ENCODE measurements at regions of chr1 and their contacts with region 1.

Region 1: GRCh38 chr1:161098210-161099068 is at the start of gene KLHDC9:
- DNase-seq: peak; percentile 87
- H3K4me3 Mint-ChIP-seq: peak within 1 kb of the TSS; percentile 73
- H3K27ac Mint-ChIP-seq: peak within 1 kb of the TSS; percentile 74
- H3K4me1 Mint-ChIP-seq: peaks cover 37% of the 10 kb centered on the region
- H3K27me3 Mint-ChIP-seq: no peaks in the 10 kb centered on the region
- total RNA-seq, gene KLHDC9: 1.2 to 1.6 TPM

Region 2: GRCh38 chr1:160795951-160796383 is 302.5 kb before region 1 on chr1 and contains the start of gene LY9:
- CTCF ChIA-PET with region 1: no interaction called
- POLR2A ChIA-PET with region 1: no interaction called
- intact Hi-C with region 1: loop called (anchors 10 kb)
- DNase-seq: peak; percentile 90
- H3K4me3 Mint-ChIP-seq: peak within 1 kb of the TSS; percentile 77
- H3K27ac Mint-ChIP-seq: peak within 1 kb of the TSS; percentile 88
- H3K4me1 Mint-ChIP-seq: peaks cover 61% of the 10 kb centered on the region
- H3K27me3 Mint-ChIP-seq: no peaks in the 10 kb centered on the region
- total RNA-seq, gene LY9: 4.8 to 4.9 TPM

Region 3: GRCh38 chr1:160997323-160998038 is 101.0 kb before region 1 on chr1:
- CTCF ChIA-PET with region 1: interaction called, 65 read pairs
- POLR2A ChIA-PET with region 1: no interaction called
- intact Hi-C with region 1: loop called (anchors 2 kb)
- DNase-seq: peak; percentile 68
- H3K4me3 Mint-ChIP-seq: no peak overlapping the region
- H3K27ac Mint-ChIP-seq: peak overlapping the region; percentile 31
- H3K4me1 Mint-ChIP-seq: peaks cover 22% of the 10 kb centered on the region
- H3K27me3 Mint-ChIP-seq: no peaks in the 10 kb centered on the region

Region 4: GRCh38 chr1:161061419-161061818 is 37.0 kb before region 1 on chr1:
- CTCF ChIA-PET with region 1: interaction called, 5 read pairs
- POLR2A ChIA-PET with region 1: interaction called, 3 read pairs
- intact Hi-C with region 1: loop called (anchors 5 kb)
- DNase-seq: no peak
- H3K4me3 Mint-ChIP-seq: no peak overlapping the region
- H3K27ac Mint-ChIP-seq: no peak overlapping the region
- H3K4me1 Mint-ChIP-seq: peaks cover 55% of the 10 kb centered on the region
- H3K27me3 Mint-ChIP-seq: no peaks in the 10 kb centered on the region

Region 5: DNA sequence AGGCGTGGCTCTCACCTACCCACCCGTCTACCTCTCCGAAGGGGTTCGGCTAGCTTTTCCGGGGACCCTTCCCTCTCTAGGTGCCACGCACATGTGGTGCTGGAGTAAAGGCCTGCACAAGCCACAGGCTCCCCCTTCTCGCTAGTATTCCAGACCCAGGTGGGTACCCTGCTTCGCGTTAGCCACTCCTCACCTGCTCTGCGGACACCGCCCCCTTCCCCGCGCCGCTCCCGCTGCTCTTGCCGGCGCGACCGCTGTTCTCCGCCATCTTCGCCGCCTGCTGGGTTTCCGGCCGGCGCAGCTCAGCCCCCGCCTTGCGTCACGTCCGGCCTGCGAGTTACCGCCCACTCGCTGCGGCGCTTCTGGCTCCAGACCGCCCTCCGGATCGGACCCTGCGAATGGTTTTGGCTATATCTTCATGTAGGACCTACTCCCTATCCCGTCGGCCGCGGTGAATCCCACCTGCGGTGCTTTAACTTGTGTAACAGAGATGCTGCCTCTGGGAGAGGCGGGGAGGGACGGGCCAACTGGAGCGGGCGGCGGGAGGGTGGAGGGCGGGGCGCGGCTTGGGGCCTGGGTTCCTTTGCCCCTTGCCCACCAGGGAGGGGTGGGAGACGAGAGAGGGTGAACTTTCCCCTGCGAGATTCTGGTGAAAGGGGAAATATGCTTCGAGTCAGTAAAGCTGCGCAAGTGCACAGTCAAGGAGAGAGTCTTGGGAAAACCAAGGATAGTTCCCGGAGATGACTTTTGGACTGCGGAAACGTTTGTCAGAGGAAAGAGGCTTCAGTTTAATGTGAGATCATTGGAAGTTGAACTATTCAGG is 19.5 kb after region 1 on chr1 and contains the starts of genes NIT1 and PFDN2:
- CTCF ChIA-PET with region 1: interaction called, 40 read pairs
- POLR2A ChIA-PET with region 1: interaction called, 6 read pairs
- intact Hi-C with region 1: loop called (anchors 2 kb)
- DNase-seq: peak; percentile 92
- H3K4me3 Mint-ChIP-seq: peak within 1 kb of the TSS; percentile 93
- H3K27ac Mint-ChIP-seq: peak within 1 kb of the TSS; percentile 84
- H3K4me1 Mint-ChIP-seq: peaks cover 66% of the 10 kb centered on the region
- H3K27me3 Mint-ChIP-seq: no peaks in the 10 kb centered on the region
- total RNA-seq, gene NIT1: 65.2 to 66.5 TPM
- total RNA-seq, gene PFDN2: 152 to 155 TPM

Region 6: DNA sequence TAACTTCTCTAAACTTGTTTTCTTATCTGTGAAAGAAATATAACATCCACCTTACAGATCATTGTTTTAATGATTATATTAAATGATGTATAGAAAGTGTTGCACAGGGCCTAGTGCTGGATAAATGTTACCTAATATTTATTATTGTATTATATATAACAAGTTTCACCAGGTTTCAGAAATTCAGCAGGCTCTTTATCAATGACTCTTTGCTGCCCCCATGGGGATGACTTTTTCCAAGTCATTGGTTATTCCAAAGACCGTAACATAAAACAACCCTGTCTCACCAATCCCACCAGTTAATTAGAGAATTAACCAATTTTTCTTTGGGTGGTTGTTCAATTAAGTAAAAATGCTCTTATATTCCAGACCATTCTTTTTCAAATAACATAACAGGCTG is 41.3 kb after region 1 on chr1:
- CTCF ChIA-PET with region 1: interaction called, 18 read pairs
- POLR2A ChIA-PET with region 1: no interaction called
- intact Hi-C with region 1: no loop called
- DNase-seq: peak; percentile 40
- H3K4me3 Mint-ChIP-seq: no peak overlapping the region
- H3K27ac Mint-ChIP-seq: no peak overlapping the region
- H3K4me1 Mint-ChIP-seq: peaks cover 3% of the 10 kb centered on the region
- H3K27me3 Mint-ChIP-seq: no peaks in the 10 kb centered on the region